Transverse colon (tissue), 4 donors: ENCODE measurements at regions of chr5 and their contacts with region 1.

Region 1: DNA sequence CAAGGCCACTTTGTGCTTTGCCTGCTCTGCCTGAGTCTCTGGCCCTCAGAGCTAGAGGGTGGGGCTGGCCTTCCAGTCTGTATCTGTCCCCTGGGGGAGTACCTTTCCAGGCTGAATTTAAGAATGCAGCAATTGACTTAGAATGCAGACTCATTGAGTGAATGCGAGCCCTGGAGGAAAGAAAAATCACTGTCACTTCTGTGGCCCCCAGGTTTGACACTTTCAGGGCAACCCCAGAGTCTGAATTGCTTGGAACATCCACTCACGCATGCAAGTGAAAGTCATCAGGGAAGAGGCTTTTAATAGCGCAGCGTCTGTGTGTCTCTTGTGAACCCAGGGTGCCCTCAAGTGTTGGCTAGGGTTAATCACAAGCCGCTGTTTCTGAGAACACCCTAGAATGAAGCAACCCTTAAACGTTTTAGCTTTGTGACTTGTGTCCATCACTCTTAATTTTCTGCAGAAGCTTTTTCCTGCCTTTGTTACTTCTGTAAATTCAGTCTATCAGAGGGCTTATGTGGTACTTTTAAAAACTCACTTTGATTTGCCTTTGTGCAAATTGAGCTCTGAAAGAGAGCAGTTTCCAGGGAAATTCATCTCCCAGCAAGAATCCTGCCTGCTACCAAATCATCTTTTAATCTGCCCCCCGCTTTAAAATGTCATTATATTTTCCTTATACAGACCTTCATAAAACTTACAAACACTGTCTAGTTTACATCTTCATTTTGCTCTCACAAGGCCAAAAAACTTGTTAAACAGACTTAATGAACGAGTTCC is 146.8 kb upstream of the IQGAP2 start:
- DNase-seq: peak; percentile 61
- H3K4me3 ChIP-seq: no peak overlapping the region
- H3K27ac ChIP-seq: no peak overlapping the region
- H3K4me1 ChIP-seq: peaks cover 0 to 11% (median 2%) of the 10 kb centered on the region in 4 donors
- H3K27me3 ChIP-seq: no peaks in the 10 kb centered on the region
- CTCF ChIP-seq: peak; percentile 50 to 66 (median 57)
- EP300 ChIP-seq: no peak
- POLR2A ChIP-seq: no peak

Region 2: DNA sequence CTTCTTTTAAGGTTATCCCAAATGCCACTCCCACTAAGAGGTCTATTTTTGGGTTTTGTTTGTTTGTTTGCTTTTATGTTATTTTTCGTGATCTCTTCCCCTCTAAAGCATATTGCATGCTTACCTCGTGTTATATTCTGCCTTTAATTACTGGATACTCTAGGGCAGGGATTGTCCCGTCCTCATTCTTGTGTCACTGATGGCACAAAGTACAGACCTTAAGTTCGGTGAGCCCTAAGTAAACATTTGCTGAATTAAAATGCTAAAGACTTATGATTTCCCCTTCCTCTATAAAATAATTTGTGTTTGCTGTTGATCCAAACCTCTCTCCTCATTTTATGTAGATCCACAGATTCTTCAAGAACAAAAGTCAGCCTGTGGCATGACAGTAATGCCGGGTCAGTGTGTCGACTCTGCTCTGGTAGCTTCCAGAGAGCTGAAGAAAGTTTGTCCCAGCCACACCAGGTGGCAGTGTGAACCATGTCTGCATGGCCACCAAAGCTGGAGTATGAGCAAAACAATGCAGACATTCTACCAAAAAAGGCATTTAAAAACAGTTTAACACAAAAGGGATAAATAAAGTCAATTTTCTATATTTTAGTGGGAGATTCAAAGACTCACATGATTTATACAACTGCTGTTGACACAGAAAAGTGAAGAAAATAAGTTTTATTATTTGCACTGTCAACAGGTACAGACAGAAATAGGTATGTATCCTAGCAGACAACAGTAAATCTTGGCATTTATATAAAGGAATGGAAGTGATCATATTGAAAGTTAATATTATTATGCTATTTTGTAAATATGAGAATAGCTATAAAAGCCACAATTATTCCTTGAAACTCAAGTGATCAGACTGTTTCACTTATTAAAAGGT is 521.2 kb before region 1 on chr5:
- in situ Hi-C with region 1: loop called in 1 of 4 experiments (anchors 25 kb)
- intact Hi-C with region 1: no loop called
- DNase-seq: peak; percentile 44
- H3K4me3 ChIP-seq: no peak overlapping the region
- H3K27ac ChIP-seq: no peak overlapping the region
- H3K4me1 ChIP-seq: no peaks in the 10 kb centered on the region
- H3K27me3 ChIP-seq: no peaks in the 10 kb centered on the region
- CTCF ChIP-seq: peak in 4 of 5 experiments; percentile 21 to 43 (median 40)
- EP300 ChIP-seq: no peak
- POLR2A ChIP-seq: no peak